ENCODE measurements at regions of chr10 and their contacts with region 1.

Region 1: DNA sequence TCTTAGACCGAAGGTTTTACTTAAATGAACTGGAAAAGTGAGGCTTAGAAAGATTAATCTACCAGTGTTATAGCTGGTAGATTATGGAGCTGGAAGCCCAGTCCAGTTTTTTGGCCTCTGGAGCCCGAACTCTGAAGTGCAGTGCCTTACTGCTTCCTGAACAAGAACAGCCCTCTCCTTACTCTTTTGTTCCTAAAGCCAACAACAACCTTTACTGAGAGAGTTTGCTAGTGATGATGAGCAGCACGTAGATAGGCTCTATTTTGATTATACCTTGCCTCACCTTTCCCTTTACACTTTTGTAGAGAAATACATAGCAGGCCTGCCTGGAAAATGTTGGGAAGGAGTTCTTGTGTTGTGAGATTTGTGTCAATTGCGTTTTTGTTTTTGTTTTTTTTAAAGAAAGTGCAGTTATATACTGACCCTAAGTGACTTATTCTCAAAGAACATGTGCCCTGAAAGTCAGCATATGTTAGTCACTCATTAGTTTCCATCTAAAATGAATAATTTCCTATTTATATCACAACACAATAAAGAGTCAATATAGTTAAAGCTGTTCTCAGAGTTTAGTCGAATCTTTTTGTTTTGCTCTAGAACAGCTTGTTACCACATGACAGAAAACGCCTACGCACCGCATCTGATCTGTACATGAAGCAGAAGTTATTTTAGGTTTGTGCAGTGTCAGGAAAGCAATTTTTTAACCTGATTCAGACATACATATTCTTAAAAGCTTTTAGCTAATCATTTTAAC is 33.0 kb downstream of the PLEKHA1 start:
- DNase-seq: peak in 8 of 9 experiments; percentile 13 to 77 (median 49)
- ATAC-seq: peak; percentile 62
- H3K4me3 ChIP-seq: peak overlapping the region in 1 of 2 experiments; percentile 15
- H3K4me3 Mint-ChIP-seq: peak overlapping the region; percentile 6
- H3K27ac ChIP-seq: peak overlapping the region in 1 of 2 experiments; percentile 24
- H3K27ac Mint-ChIP-seq: peak overlapping the region; percentile 86
- H3K4me1 ChIP-seq: peaks cover 50% of the 10 kb centered on the region
- H3K4me1 Mint-ChIP-seq: peaks cover 46% of the 10 kb centered on the region
- H3K27me3 ChIP-seq: no peaks in the 10 kb centered on the region
- H3K27me3 Mint-ChIP-seq: no peaks in the 10 kb centered on the region
- CTCF ChIP-seq: no peak

Region 2: DNA sequence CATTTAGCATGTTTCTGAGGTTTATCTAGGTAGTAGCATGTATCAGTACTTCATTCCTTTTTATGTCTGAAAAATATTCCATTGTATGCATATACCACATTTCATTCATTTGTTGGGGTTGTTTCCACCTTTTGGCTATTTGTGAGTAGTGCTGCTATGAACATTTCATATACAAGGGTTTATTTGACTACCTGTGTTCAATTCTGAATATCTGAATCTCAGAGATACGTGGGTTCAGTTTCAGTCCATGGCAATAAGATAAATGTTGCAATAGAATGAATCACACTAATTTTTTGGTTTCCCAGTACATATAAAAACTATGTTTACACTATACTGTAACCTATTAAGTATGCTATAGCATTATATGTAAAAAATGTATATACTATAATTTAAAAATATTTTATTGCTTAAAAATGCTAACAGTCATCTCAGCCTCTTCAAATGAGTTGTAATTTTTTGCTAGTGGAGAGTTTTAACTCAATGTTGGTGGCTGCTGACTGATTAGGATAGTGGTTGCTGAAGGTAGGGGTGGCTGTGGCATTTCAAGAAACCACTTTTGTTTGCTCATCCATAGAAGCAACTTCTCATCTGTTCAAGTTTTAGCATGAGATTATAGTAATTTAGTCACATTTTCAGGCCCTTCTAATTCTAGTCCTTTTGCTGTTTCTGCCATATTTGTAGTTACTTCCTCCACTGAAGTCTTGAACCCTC is 19.1 kb before region 1 on chr10:
- CTCF ChIA-PET with region 1: no interaction called
- POLR2A ChIA-PET with region 1: interaction called, 3 read pairs
- intact Hi-C with region 1: loop called in 1 of 2 experiments (anchors 2 kb)
- DNase-seq: no peak
- ATAC-seq: no peak
- H3K4me3 ChIP-seq: no peak overlapping the region
- H3K4me3 Mint-ChIP-seq: no peak overlapping the region
- H3K27ac ChIP-seq: no peak overlapping the region
- H3K27ac Mint-ChIP-seq: peak overlapping the region; percentile 7
- H3K4me1 ChIP-seq: peaks cover 17% of the 10 kb centered on the region
- H3K4me1 Mint-ChIP-seq: peaks cover 65% of the 10 kb centered on the region
- H3K27me3 ChIP-seq: no peaks in the 10 kb centered on the region
- H3K27me3 Mint-ChIP-seq: no peaks in the 10 kb centered on the region
- CTCF ChIP-seq: no peak

Region 3: DNA sequence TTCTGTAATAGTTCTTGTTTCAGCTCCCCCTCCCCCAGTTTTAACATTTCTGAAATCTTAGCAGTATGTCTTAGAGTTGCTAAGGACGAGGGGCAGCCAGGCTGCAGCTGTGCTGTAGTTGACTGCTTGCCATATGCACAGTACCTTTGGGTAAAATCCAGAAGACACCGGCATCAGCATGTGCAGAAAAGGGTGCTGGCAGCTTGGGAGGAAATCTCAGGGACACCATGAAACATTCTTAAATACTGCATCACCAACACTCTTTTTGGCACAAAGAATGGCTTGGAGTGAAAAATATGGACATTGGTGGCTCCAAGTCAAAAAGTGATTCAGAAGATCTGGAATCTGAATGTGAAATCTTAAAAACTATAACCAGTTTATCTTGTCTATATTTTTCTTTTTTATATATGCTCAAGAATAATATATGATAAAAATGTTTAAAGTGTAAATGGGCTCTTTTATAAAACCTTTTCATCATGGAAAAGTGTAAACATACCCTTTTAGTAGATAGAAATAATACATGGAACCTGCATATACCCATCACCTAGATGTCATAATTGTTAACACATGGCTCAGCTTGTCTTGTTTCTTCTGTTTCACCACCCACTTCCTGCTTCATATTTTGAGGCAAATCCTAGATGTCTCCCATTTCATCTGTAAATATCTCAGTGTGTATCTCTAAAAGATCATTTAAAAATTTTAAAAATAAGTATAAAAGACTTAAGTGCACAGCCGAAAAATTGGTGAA is 12.5 kb after region 1 on chr10:
- CTCF ChIA-PET with region 1: interaction called, 4 read pairs
- POLR2A ChIA-PET with region 1: interaction called, 9 read pairs
- intact Hi-C with region 1: loop called in 1 of 2 experiments (anchors 1 kb)
- DNase-seq: peak in 1 of 9 experiments; percentile 23
- ATAC-seq: no peak
- H3K4me3 ChIP-seq: no peak overlapping the region
- H3K4me3 Mint-ChIP-seq: no peak overlapping the region
- H3K27ac ChIP-seq: peak overlapping the region; percentile 26 to 66
- H3K27ac Mint-ChIP-seq: peak overlapping the region; percentile 88
- H3K4me1 ChIP-seq: peaks cover 96% of the 10 kb centered on the region
- H3K4me1 Mint-ChIP-seq: peaks cover 87% of the 10 kb centered on the region
- H3K27me3 ChIP-seq: no peaks in the 10 kb centered on the region
- H3K27me3 Mint-ChIP-seq: no peaks in the 10 kb centered on the region
- CTCF ChIP-seq: no peak